ENCODE measurements at regions of chr12 and their contacts with region 1.

Region 1: GRCh38 chr12:14845350-14845750 is 2.0 kb upstream of the ART4 start:
- DNase-seq: no peak
- ATAC-seq: peak; percentile 81
- H3K4me3 Mint-ChIP-seq: no peak overlapping the region
- H3K27ac Mint-ChIP-seq: peak overlapping the region; percentile 51
- H3K4me1 Mint-ChIP-seq: peaks cover 14% of the 10 kb centered on the region
- H3K27me3 Mint-ChIP-seq: no peaks in the 10 kb centered on the region
- CTCF ChIP-seq: peak; percentile 87

Region 2: DNA sequence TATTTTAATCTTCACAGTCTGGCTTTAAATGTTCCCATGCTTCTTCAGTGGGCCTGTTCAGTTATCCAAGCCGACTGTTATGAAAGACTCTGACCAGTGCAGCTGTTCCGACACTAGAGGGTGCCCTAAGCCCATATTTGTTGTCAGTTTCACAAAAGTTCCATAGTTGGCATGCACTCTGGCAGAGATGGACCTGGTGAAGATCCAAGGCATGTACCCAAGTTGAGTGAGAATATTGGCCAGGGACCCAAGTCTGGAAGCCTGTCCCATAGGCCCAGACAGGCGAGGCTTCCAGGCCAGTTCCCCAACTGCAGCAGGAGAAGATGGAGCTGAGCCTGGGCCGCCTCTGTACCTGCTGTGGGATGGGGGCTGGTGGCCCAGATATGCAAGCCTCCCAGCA is 121.6 kb before region 1 on chr12:
- CTCF ChIA-PET with region 1: interaction called, 3 read pairs
- POLR2A ChIA-PET with region 1: no interaction called
- intact Hi-C with region 1: loop called (anchors 1 kb)
- DNase-seq: no peak
- ATAC-seq: peak; percentile 76
- H3K4me3 Mint-ChIP-seq: no peak overlapping the region
- H3K27ac Mint-ChIP-seq: no peak overlapping the region
- H3K4me1 Mint-ChIP-seq: no peaks in the 10 kb centered on the region
- H3K27me3 Mint-ChIP-seq: peaks cover 11% of the 10 kb centered on the region
- CTCF ChIP-seq: peak; percentile 25

Region 3: GRCh38 chr12:14884458-14884878 is 39.1 kb after region 1 on chr12:
- CTCF ChIA-PET with region 1: interaction called, 4 read pairs
- POLR2A ChIA-PET with region 1: interaction called, 5 read pairs
- intact Hi-C with region 1: loop called (anchors 2 kb)
- DNase-seq: peak; percentile 57
- ATAC-seq: peak; percentile 96
- H3K4me3 Mint-ChIP-seq: peak overlapping the region; percentile 66
- H3K27ac Mint-ChIP-seq: peak overlapping the region; percentile 76
- H3K4me1 Mint-ChIP-seq: peaks cover 55% of the 10 kb centered on the region
- H3K27me3 Mint-ChIP-seq: peaks cover 25% of the 10 kb centered on the region
- CTCF ChIP-seq: no peak

Region 4: GRCh38 chr12:14920475-14921126 is 75.3 kb after region 1 on chr12:
- CTCF ChIA-PET with region 1: interaction called, 3 read pairs
- POLR2A ChIA-PET with region 1: no interaction called
- intact Hi-C with region 1: loop called (anchors 1 kb)
- DNase-seq: no peak
- ATAC-seq: peak; percentile 75
- H3K4me3 Mint-ChIP-seq: no peak overlapping the region
- H3K27ac Mint-ChIP-seq: peak overlapping the region; percentile 76
- H3K4me1 Mint-ChIP-seq: peaks cover 17% of the 10 kb centered on the region
- H3K27me3 Mint-ChIP-seq: no peaks in the 10 kb centered on the region
- CTCF ChIP-seq: no peak

Region 5: DNA sequence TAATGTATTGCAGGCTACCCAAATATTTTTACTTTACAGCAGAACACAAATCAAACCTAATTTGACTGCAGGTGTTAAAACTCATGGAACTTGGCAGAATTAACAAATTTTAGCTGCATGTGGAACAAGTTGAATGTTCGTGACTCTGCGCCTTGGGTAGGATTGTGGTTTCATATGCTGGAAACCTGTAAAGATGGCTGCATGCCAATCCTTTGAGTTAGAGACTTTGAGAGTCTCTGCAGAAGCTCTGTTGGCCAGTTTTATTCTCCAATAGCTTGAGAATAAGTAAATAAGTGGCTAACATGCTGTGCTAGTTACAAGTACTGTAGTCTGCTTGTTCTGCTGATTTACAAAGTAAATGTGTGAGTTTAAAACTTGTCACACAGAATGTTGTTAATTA is 205.3 kb after region 1 on chr12:
- CTCF ChIA-PET with region 1: no interaction called
- POLR2A ChIA-PET with region 1: no interaction called
- intact Hi-C with region 1: no loop called
- DNase-seq: no peak
- ATAC-seq: no peak
- H3K4me3 Mint-ChIP-seq: no peak overlapping the region
- H3K27ac Mint-ChIP-seq: no peak overlapping the region
- H3K4me1 Mint-ChIP-seq: no peaks in the 10 kb centered on the region
- H3K27me3 Mint-ChIP-seq: peaks cover 5% of the 10 kb centered on the region
- CTCF ChIP-seq: no peak

Region 6: GRCh38 chr12:15220994-15221885 is 375.9 kb after region 1 on chr12 and contains the start of gene RERG:
- CTCF ChIA-PET with region 1: interaction called, 16 read pairs
- POLR2A ChIA-PET with region 1: interaction called, 4 read pairs
- intact Hi-C with region 1: loop called (anchors 1 kb)
- DNase-seq: peak; percentile 72
- ATAC-seq: peak; percentile 99
- H3K4me3 Mint-ChIP-seq: peak within 1 kb of the TSS; percentile 68
- H3K27ac Mint-ChIP-seq: no peak within 1 kb of the TSS
- H3K4me1 Mint-ChIP-seq: peaks cover 7% of the 10 kb centered on the region
- H3K27me3 Mint-ChIP-seq: peaks cover 33% of the 10 kb centered on the region
- CTCF ChIP-seq: peak; percentile 69
- total RNA-seq, gene RERG: not detected in 2 replicates

Region 7: GRCh38 chr12:15522565-15523187 is 677.3 kb after region 1 on chr12:
- CTCF ChIA-PET with region 1: no interaction called
- POLR2A ChIA-PET with region 1: no interaction called
- intact Hi-C with region 1: loop called (anchors 10 kb)
- DNase-seq: no peak
- ATAC-seq: no peak
- H3K4me3 Mint-ChIP-seq: no peak overlapping the region
- H3K27ac Mint-ChIP-seq: no peak overlapping the region
- H3K4me1 Mint-ChIP-seq: peaks cover 12% of the 10 kb centered on the region
- H3K27me3 Mint-ChIP-seq: peaks cover 15% of the 10 kb centered on the region
- CTCF ChIP-seq: no peak

Measured in activated B cell treated with CpG ODN at 0.5 μM for 24 hours (primary cell).